BJ (cell line): ENCODE measurements at regions of chr20 and their contacts with region 1.

Region 1: GRCh38 chr20:20360464-20360863 is 7.4 kb upstream of the INSM1 start:
- DNase-seq: peak; percentile 5
- H3K4me3 ChIP-seq: no peak overlapping the region
- H3K27me3 ChIP-seq: peaks cover 38% of the 10 kb centered on the region
- CTCF ChIP-seq: peak; percentile 88

Region 2: GRCh38 chr20:20407891-20408805 is 47.7 kb after region 1 on chr20:
- CTCF ChIA-PET with region 1: interaction called, 13 read pairs
- POLR2A ChIA-PET with region 1: no interaction called
- DNase-seq: no peak
- H3K4me3 ChIP-seq: no peak overlapping the region
- H3K27me3 ChIP-seq: no peaks in the 10 kb centered on the region
- CTCF ChIP-seq: peak; percentile 47